Activated T-helper 1 cell treated with anti-CD3 and anti-CD28 coated beads, Interleukin-12 subunit alpha, Interleukin-12 subunit beta, Interleukin-2, Interleukin-4 antibody, amounts not matched to agents 30 ng/mL and 10 ng/mL and 1 ng/mL, durations not matched to agents 14 hours and 24 hours and 36 hours (primary cell): ENCODE measurements at regions of chr3 and their contacts with region 1.

Region 1: DNA sequence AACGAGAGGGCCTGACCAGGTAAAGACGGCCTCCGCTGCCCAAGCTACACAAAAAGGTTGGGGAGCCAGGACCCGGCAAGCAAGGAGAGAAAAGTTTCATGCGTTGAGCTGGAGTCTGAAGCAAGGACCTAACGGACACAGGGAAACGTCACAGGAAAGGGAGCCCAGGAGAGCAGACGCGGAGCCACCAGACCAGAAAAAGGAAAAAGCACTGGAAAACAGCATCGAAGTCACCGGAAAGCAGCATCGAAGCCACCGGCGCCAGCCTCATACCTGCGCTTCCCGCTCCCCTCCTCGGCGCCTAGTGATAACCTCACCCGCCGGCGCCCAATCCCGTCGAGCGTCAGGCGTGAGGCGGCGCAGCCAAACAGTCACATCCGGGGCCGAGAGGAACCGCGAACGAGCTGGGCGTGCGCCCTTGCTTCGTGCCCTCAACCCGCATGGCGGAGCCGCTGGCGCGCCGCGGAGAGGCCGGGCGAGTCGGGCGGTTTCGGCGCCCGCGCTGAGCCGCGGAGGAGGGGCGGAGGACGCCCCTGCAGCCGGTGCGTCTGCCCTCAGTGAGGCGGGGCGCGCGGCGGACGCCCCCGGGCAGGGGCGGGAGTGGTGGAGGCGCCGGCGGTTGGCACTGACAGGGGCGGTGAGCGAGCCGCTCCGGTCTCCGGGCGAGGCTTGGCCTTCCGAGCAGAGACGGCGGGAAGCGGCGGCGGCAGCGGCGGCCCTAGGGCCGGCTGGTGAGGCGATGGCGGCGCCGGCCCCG is at the starts of genes FBXO45 and WDR53:
- DNase-seq: peak; percentile 94
- H3K4me3 Mint-ChIP-seq: peak within 1 kb of the TSS; percentile 96
- H3K27ac Mint-ChIP-seq: peak within 1 kb of the TSS; percentile 95
- H3K4me1 Mint-ChIP-seq: peaks cover 44% of the 10 kb centered on the region
- H3K27me3 Mint-ChIP-seq: no peaks in the 10 kb centered on the region
- total RNA-seq, gene FBXO45: 22.8 and 24.3 TPM in 2 replicates
- total RNA-seq, gene WDR53: 24.8 and 25.5 TPM in 2 replicates

Region 2: DNA sequence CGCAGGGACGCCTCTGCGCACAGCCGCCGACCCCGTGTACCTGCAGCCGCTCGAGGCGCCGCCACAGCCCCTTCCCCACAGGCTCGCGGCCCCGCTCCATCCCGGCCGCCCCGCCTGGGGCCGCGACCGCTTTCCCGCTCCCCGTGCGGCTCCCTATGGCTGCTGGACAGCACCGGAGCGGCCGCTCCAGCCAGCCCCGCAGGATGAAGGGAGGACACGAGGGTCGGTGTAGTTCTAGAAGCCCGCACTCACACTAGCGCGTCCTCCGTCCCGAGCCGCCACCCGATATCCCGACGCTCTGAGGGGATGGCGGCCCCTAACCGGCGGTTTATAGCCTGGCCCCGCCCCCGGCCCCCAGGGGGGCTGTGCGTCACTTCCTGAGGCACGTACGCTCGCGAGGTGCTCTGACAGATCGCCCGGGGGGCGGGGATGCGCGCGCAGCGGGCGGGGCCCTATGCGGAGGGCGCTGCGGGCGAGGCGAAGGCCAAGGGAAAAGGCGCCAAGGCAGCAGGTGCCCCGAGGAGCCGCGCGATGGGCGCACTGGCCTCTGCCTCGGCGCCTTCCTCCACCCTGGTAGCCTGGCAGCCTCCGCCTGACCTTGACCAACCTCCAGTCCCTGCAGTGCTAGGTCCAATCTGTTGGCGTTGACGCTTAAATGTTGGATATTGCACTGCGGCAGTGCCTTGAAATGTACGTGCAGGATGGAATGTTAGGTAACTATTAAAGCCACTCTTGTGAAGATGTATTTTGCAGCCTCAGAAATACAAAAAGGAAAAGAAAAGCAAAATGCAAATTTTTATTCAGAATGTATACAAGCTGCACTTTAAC is 486.4 kb before region 1 on chr3 and contains the start of gene TFRC:
- intact Hi-C with region 1: loop called (anchors 1 kb)
- DNase-seq: peak; percentile 95
- H3K4me3 Mint-ChIP-seq: peak within 1 kb of the TSS; percentile 100
- H3K27ac Mint-ChIP-seq: peak within 1 kb of the TSS; percentile 98
- H3K4me1 Mint-ChIP-seq: peaks cover 38% of the 10 kb centered on the region
- H3K27me3 Mint-ChIP-seq: no peaks in the 10 kb centered on the region
- total RNA-seq, gene TFRC: 791 TPM in 2 replicates

Region 3: DNA sequence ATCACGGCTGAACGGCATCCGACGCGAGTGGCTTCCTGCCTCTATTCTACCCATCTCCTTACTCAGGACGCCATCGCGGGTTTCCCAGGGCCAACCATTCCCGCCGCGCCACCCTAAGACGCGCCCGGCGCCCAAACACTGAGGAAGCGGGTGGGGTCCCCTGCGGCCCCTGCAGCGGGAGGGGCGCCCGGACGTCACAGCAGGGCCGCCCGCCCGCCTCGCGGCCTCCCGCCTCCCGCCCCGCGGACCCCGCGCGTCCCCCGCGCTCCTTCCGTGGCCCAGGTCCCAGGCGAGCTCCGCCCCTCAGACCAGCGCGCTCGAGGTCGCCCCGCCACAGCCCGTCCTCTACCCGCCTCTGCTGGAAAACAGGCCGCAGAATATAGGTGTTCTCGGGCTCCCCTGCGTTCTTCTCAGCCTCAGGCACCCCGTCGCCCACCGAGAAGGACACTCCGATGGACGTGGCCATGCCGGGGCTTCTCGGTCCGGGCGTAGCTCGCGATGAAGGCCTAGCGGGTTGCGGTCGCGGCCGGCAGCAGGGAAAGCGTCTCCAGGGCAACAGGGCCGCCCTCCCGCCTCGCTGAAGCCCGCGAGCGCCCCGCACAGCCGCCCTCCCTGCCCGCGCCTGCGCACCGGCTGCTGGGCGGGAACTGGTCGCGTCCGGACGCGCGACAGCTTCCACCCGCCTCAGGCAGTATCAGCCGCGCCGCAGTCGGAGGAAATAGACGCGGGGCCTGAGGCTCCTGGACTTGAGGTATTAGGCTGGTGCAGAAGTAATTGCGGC is 250.5 kb before region 1 on chr3 and contains the start of gene DYNLT2B:
- intact Hi-C with region 1: loop called (anchors 5 kb)
- DNase-seq: peak; percentile 87
- H3K4me3 Mint-ChIP-seq: peak within 1 kb of the TSS; percentile 95
- H3K27ac Mint-ChIP-seq: peak within 1 kb of the TSS; percentile 98
- H3K4me1 Mint-ChIP-seq: peaks cover 7% of the 10 kb centered on the region
- H3K27me3 Mint-ChIP-seq: no peaks in the 10 kb centered on the region
- total RNA-seq, gene DYNLT2B: 11.6 and 12.7 TPM in 2 replicates

Region 4: GRCh38 chr3:196537319-196537984 is 31.0 kb before region 1 on chr3:
- intact Hi-C with region 1: loop called (anchors 2 kb)
- DNase-seq: peak; percentile 33
- H3K4me3 Mint-ChIP-seq: no peak overlapping the region
- H3K27ac Mint-ChIP-seq: no peak overlapping the region
- H3K4me1 Mint-ChIP-seq: peaks cover 5% of the 10 kb centered on the region
- H3K27me3 Mint-ChIP-seq: peaks cover 12% of the 10 kb centered on the region

Region 5: DNA sequence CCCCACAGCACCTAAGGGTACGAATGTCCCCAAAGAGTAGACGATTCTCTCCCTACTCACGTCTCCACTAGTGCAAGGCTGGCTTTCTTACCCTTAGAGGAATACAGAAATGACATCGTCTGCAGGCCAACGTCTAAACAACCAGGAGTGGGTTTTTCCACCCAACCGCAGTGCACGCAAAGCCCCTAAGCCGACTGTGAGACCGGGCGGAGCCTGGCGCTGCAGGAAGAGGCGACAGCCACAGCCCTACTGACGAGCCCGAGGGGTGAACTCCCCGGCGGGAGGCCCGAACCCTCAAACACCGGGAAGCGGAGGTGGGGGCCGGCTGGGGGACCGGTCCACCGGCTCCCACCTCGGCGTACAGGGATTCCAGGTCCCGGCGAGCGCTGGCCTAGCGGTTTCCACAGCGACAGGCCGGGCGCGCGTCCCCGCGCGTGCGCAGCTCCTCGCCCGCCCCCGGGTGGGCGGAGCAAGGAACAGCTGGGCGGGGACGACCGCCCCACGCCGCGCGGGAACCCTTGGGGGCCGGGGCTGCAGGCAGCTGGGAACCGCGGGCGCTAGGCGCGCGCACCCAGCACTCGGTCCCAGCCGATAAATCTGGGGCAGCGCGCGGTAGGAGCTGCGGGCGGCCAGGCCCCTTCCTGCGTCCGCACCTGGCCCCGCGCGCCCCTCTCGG is 143.6 kb after region 1 on chr3 and contains the starts of genes CEP19 and PIGX:
- intact Hi-C with region 1: loop called (anchors 1 kb)
- DNase-seq: peak; percentile 91
- H3K4me3 Mint-ChIP-seq: peak within 1 kb of the TSS; percentile 90
- H3K27ac Mint-ChIP-seq: peak within 1 kb of the TSS; percentile 98
- H3K4me1 Mint-ChIP-seq: peaks cover 49% of the 10 kb centered on the region
- H3K27me3 Mint-ChIP-seq: no peaks in the 10 kb centered on the region
- total RNA-seq, gene CEP19: 3.9 and 4.1 TPM in 2 replicates
- total RNA-seq, gene PIGX: 49.7 and 52.1 TPM in 2 replicates

Region 6: GRCh38 chr3:196942226-196942914 is 373.9 kb after region 1 on chr3 and contains the start of gene NCBP2:
- intact Hi-C with region 1: loop called (anchors 1 kb)
- DNase-seq: peak; percentile 100
- H3K4me3 Mint-ChIP-seq: peak within 1 kb of the TSS; percentile 100
- H3K27ac Mint-ChIP-seq: peak within 1 kb of the TSS; percentile 97
- H3K4me1 Mint-ChIP-seq: peaks cover 55% of the 10 kb centered on the region
- H3K27me3 Mint-ChIP-seq: peaks cover 2% of the 10 kb centered on the region
- total RNA-seq, gene NCBP2: 102 and 111 TPM in 2 replicates